CD8-positive, alpha-beta T cell (primary cell): ENCODE measurements at regions of chr6 and their contacts with region 1.

Region 1: GRCh38 chr6:130885392-130886192 is 58.4 kb downstream of the SMLR1 start:
- DNase-seq: peak; percentile 50 to 86 (median 73)
- ATAC-seq: peak; percentile 91
- H3K4me3 ChIP-seq: no peak overlapping the region
- H3K4me3 Mint-ChIP-seq: no peak overlapping the region
- H3K27ac ChIP-seq: no peak overlapping the region
- H3K27ac Mint-ChIP-seq: no peak overlapping the region
- H3K4me1 ChIP-seq: no peaks in the 10 kb centered on the region
- H3K4me1 Mint-ChIP-seq: no peaks in the 10 kb centered on the region
- H3K27me3 ChIP-seq: no peaks in the 10 kb centered on the region
- H3K27me3 Mint-ChIP-seq: no peaks in the 10 kb centered on the region
- CTCF ChIP-seq: peak; percentile 97

Region 2: DNA sequence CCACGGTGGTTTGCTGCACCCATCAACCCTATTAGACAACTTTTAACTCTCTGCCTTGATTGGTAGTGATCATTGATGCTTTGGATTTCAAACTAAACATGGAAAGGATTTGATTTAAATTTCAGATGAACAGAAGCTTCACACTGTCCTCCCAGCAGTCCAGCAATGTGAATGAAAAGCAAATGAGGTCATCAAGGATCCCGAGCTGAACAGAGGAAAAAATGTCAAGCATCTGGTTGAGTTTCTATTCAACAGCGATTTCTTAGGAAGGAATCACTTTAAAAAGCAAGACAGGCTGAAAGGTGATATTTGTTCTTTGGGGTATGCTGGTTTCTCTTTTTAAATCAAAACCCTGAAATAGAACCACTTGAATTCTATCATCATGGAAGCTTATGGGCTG is 652.3 kb before region 1 on chr6:
- CTCF ChIA-PET with region 1: no interaction called
- POLR2A ChIA-PET with region 1: no interaction called
- intact Hi-C with region 1: no loop called
- DNase-seq: no peak
- ATAC-seq: no peak
- H3K4me3 ChIP-seq: no peak overlapping the region
- H3K4me3 Mint-ChIP-seq: no peak overlapping the region
- H3K27ac ChIP-seq: no peak overlapping the region
- H3K27ac Mint-ChIP-seq: no peak overlapping the region
- H3K4me1 ChIP-seq: no peaks in the 10 kb centered on the region
- H3K4me1 Mint-ChIP-seq: peaks cover 10% of the 10 kb centered on the region
- H3K27me3 ChIP-seq: no peaks in the 10 kb centered on the region
- H3K27me3 Mint-ChIP-seq: no peaks in the 10 kb centered on the region
- CTCF ChIP-seq: no peak

Region 3: DNA sequence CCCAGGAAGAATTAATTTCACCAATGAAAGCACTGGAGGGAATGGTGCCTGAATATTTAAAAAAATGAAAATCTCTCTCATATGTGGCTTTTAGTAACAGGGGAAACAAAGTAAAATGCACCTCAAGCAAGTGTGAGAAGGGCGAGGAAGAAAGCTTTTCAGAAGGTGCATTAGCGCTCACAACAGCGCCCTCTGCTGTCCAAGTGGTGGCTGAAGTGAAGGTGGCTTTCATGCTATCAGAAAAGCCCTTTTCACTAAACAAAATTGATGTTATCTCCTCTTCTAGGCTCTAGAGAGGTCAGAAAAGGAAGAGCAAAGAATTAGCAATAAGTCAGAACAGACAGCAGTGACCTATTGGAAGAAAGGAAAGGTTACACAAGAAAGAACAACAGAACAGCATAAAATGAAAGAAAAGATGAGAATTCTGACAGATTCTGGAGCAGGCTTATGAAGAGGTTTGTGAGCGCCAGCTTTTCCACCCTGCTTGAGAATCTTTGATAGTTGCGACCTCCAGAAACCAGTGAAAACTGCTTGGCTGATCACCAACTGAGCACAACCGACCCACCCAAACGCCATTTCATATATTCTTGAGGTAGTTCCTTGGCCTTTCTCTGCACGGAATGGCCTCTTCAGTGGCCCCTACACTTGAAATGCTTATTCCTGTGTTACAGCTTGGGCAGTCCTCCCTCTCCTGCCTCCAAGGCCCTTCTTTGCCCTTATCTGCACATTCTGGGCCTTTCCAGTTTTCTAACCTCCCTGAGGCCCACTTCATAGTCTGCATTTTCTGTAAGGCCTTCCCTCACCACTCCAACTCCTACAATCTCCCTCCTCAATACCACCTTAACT is 13.1 kb before region 1 on chr6:
- CTCF ChIA-PET with region 1: interaction called, 16 read pairs
- POLR2A ChIA-PET with region 1: interaction called, 5 read pairs
- intact Hi-C with region 1: no loop called
- DNase-seq: peak; percentile 42 to 79 (median 71)
- ATAC-seq: peak; percentile 56
- H3K4me3 ChIP-seq: no peak overlapping the region
- H3K4me3 Mint-ChIP-seq: no peak overlapping the region
- H3K27ac ChIP-seq: no peak overlapping the region
- H3K27ac Mint-ChIP-seq: no peak overlapping the region
- H3K4me1 ChIP-seq: no peaks in the 10 kb centered on the region
- H3K4me1 Mint-ChIP-seq: peaks cover 4% of the 10 kb centered on the region
- H3K27me3 ChIP-seq: no peaks in the 10 kb centered on the region
- H3K27me3 Mint-ChIP-seq: no peaks in the 10 kb centered on the region
- CTCF ChIP-seq: peak; percentile 98

Region 4: DNA sequence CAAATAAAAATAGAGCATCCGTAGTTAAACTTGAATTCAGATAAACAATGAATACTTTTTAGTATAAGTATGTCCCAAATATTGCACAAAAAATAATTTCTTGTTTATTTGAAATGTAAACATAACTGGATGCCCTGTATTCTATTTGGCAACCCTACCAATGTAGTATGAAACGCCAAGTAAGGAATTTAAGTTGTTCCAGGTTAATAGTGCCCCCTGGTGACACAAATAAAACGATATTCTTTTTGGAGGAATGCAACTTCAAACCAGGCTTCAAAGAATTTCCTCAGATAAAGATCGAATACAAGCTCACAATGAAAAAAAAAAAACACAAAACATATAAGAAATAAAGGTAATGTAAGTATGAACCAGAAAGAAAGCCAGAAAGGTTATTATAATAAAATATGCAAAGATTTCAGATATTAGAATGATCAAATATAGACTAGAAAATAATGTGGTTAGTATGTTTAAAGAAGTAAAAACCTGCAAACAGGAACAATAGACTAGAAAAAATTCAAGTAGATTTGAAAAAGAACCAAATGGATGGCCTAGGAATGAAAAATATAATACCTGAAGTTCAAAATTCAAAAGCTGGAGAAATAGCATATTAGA is 231.3 kb after region 1 on chr6:
- CTCF ChIA-PET with region 1: interaction called, 148 read pairs
- POLR2A ChIA-PET with region 1: no interaction called
- intact Hi-C with region 1: loop called (anchors 1 kb)
- DNase-seq: peak in 3 of 9 experiments; percentile 7 to 64 (median 54)
- ATAC-seq: no peak
- H3K4me3 ChIP-seq: no peak overlapping the region
- H3K4me3 Mint-ChIP-seq: no peak overlapping the region
- H3K27ac ChIP-seq: no peak overlapping the region
- H3K27ac Mint-ChIP-seq: no peak overlapping the region
- H3K4me1 ChIP-seq: no peaks in the 10 kb centered on the region
- H3K4me1 Mint-ChIP-seq: no peaks in the 10 kb centered on the region
- H3K27me3 ChIP-seq: no peaks in the 10 kb centered on the region
- H3K27me3 Mint-ChIP-seq: no peaks in the 10 kb centered on the region
- CTCF ChIP-seq: peak; percentile 60

Region 5: DNA sequence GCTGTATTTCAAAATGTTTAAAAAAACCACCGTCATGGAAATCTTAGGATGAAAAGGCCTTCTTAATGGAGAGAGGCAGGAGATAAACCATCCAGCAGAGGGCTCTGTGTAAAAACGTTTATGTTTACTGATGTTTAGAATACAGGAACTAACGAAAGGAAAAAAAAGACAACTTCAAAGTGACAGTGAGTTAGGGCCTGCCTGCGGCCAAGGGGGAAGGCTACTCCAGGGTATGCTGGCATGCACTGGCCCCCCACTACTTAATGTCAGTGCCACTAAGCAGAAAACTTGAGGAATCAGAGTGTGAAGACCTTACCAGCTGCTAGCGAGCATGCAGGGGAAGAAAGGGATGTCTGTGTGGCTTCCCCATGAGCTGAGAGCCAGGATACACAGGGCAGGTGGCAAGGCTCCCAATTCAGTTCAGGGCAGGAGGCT is 297.4 kb after region 1 on chr6:
- CTCF ChIA-PET with region 1: interaction called, 18 read pairs
- POLR2A ChIA-PET with region 1: no interaction called
- intact Hi-C with region 1: loop called in 1 of 2 experiments (anchors 5 kb)
- DNase-seq: peak in 6 of 9 experiments; percentile 9 to 68 (median 40)
- ATAC-seq: peak; percentile 66
- H3K4me3 ChIP-seq: no peak overlapping the region
- H3K4me3 Mint-ChIP-seq: peak overlapping the region; percentile 69
- H3K27ac ChIP-seq: peak overlapping the region in 1 of 2 experiments; percentile 23
- H3K27ac Mint-ChIP-seq: peak overlapping the region; percentile 89
- H3K4me1 ChIP-seq: peaks cover 11% of the 10 kb centered on the region
- H3K4me1 Mint-ChIP-seq: peaks cover 13% of the 10 kb centered on the region
- H3K27me3 ChIP-seq: no peaks in the 10 kb centered on the region
- H3K27me3 Mint-ChIP-seq: no peaks in the 10 kb centered on the region
- CTCF ChIP-seq: peak; percentile 63

Region 6: GRCh38 chr6:131532580-131533039 is 647.0 kb after region 1 on chr6:
- CTCF ChIA-PET with region 1: interaction called, 39 read pairs
- POLR2A ChIA-PET with region 1: interaction called, 3 read pairs
- intact Hi-C with region 1: loop called (anchors 1 kb)
- DNase-seq: peak in 3 of 9 experiments; percentile 8 to 31 (median 12)
- ATAC-seq: peak; percentile 43
- H3K4me3 ChIP-seq: no peak overlapping the region
- H3K4me3 Mint-ChIP-seq: no peak overlapping the region
- H3K27ac ChIP-seq: no peak overlapping the region
- H3K27ac Mint-ChIP-seq: peak overlapping the region; percentile 83
- H3K4me1 ChIP-seq: peaks cover 39% of the 10 kb centered on the region
- H3K4me1 Mint-ChIP-seq: peaks cover 52% of the 10 kb centered on the region
- H3K27me3 ChIP-seq: no peaks in the 10 kb centered on the region
- H3K27me3 Mint-ChIP-seq: no peaks in the 10 kb centered on the region
- CTCF ChIP-seq: no peak

Region 7: DNA sequence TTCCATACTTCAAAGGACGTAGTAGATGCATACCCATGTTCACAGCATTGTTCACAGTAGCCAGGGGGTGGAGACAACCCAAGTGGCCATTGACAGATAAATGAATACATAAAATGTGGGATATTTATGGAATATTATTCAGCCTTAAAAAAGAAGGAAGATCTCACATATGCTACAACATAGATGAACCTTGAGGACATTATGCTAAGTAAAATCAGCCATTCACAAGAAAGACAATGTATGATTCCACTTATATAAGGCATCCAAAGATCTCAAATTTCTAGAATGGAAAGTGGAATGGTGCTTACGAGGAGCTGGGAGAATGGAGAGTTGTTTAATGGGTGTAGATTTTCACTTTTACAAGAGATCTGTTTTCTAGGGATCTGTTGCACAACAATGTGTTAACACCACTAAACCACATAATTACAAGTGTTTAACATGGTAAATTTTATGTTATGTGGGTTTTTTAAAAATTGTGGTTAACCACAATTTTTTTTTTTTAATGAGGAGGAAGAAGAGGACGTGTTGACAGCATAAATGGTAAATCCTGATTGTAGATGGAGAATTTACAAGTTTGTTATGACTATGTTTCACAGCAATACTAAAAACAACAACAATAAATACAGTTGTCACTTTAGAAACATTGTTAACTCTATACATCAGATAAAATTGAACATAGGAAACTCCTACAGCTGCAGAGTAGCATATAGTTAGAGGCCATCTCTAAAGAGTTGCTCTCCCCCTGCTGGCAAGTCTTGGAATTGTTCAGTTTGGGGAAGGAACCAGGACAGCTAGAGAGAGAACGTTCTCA is 1024.0 kb after region 1 on chr6:
- CTCF ChIA-PET with region 1: interaction called, 5 read pairs
- POLR2A ChIA-PET with region 1: no interaction called
- intact Hi-C with region 1: loop called (anchors 1 to 5 kb)
- DNase-seq: peak; percentile 51 to 77 (median 71)
- ATAC-seq: peak; percentile 93
- H3K4me3 ChIP-seq: no peak overlapping the region
- H3K4me3 Mint-ChIP-seq: no peak overlapping the region
- H3K27ac ChIP-seq: no peak overlapping the region
- H3K27ac Mint-ChIP-seq: no peak overlapping the region
- H3K4me1 ChIP-seq: peaks cover 6% of the 10 kb centered on the region
- H3K4me1 Mint-ChIP-seq: peaks cover 7% of the 10 kb centered on the region
- H3K27me3 ChIP-seq: peaks cover 0 to 10% of the 10 kb centered on the region in 2 experiments
- H3K27me3 Mint-ChIP-seq: peaks cover 23% of the 10 kb centered on the region
- CTCF ChIP-seq: peak; percentile 82

Region 8: DNA sequence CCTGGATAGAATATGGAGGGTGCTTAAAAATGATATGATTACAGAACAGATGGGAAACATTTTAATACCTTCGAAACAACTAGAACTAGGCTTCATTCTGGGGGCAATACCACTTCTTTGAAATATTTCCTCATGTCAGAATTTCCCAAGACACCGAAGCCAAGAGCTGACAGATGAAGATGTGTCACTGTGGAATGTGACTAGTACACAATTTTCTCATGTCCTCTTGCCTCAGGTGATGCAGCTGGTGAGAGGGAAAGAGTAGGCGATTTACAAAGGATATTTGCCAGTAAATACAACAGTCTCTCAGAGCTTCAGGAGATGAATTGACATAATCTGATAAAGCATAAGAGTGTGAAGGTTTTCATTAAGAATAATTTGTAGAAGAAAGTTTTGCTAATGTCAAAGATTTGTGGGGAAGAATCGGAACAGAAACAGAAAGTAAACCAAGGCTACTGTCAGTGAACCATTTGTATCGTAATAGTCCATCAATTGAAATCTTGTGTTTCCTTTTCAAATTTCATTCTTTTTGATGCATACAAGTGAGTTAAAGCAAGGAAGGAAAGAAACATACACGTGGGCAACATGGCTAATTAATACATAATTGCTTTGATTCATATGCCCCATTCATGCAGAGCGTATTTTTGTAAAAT is 1230.2 kb after region 1 on chr6:
- CTCF ChIA-PET with region 1: no interaction called
- POLR2A ChIA-PET with region 1: no interaction called
- intact Hi-C with region 1: no loop called
- DNase-seq: no peak
- ATAC-seq: no peak
- H3K4me3 ChIP-seq: no peak overlapping the region
- H3K4me3 Mint-ChIP-seq: no peak overlapping the region
- H3K27ac ChIP-seq: no peak overlapping the region
- H3K27ac Mint-ChIP-seq: no peak overlapping the region
- H3K4me1 ChIP-seq: no peaks in the 10 kb centered on the region
- H3K4me1 Mint-ChIP-seq: no peaks in the 10 kb centered on the region
- H3K27me3 ChIP-seq: no peaks in the 10 kb centered on the region
- H3K27me3 Mint-ChIP-seq: no peaks in the 10 kb centered on the region
- CTCF ChIP-seq: no peak

Region 9: GRCh38 chr6:132483779-132484679 is 1598.4 kb after region 1 on chr6:
- CTCF ChIA-PET with region 1: no interaction called
- POLR2A ChIA-PET with region 1: no interaction called
- intact Hi-C with region 1: loop called in 1 of 2 experiments (anchors 5 kb)
- DNase-seq: peak in 6 of 9 experiments; percentile 12 to 78 (median 44)
- ATAC-seq: peak; percentile 71
- H3K4me3 ChIP-seq: no peak overlapping the region
- H3K4me3 Mint-ChIP-seq: no peak overlapping the region
- H3K27ac ChIP-seq: no peak overlapping the region
- H3K27ac Mint-ChIP-seq: no peak overlapping the region
- H3K4me1 ChIP-seq: no peaks in the 10 kb centered on the region
- H3K4me1 Mint-ChIP-seq: peaks cover 11% of the 10 kb centered on the region
- H3K27me3 ChIP-seq: no peaks in the 10 kb centered on the region
- H3K27me3 Mint-ChIP-seq: no peaks in the 10 kb centered on the region
- CTCF ChIP-seq: peak; percentile 90